Common myeloid progenitor, CD34-positive (primary cell): ENCODE measurements at regions of chr19 and their contacts with region 1.

Region 1: GRCh38 chr19:43425567-43426392 is 11.1 kb downstream of the TEX101 start:
- DNase-seq: peak in 2 of 3 donors; percentile 59 to 61
- H3K4me3 ChIP-seq: no peak overlapping the region
- H3K27ac ChIP-seq: no peak overlapping the region
- H3K4me1 ChIP-seq: peaks cover 0 to 3% (median 1%) of the 10 kb centered on the region in 4 experiments
- H3K27me3 ChIP-seq: no peaks in the 10 kb centered on the region

Region 2: DNA sequence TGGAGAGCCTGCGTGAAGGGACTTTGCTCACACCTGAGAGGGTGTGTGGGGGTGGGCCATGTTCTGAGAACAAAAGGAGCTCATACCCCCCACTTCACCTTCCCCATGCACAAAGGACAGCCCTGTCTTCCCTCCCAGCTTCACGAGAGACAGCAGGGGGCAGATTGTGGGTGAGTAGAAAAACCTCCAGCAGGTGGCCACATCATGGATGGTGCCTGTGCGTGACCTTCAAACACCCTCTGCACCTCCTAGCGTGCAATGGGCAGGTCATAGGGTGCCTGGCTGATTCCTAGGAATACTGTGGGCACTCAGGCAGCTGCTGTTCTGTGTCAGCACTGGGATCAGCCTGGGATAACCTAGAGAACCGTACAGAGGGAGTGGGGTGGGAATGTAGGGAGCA is 120.1 kb before region 1 on chr19:
- CTCF ChIA-PET with region 1: interaction called, 18 read pairs
- POLR2A ChIA-PET with region 1: no interaction called
- DNase-seq: peak; percentile 16 to 47 (median 41)
- H3K4me3 ChIP-seq: no peak overlapping the region
- H3K27ac ChIP-seq: no peak overlapping the region
- H3K4me1 ChIP-seq: peaks cover 0 to 5% (median 2%) of the 10 kb centered on the region in 4 experiments
- H3K27me3 ChIP-seq: peaks cover 0 to 8% (median 0%) of the 10 kb centered on the region in 5 experiments

Region 3: GRCh38 chr19:43474986-43475705 is 49.4 kb after region 1 on chr19:
- CTCF ChIA-PET with region 1: no interaction called
- POLR2A ChIA-PET with region 1: no interaction called
- DNase-seq: peak; percentile 91 to 96 (median 93)
- H3K4me3 ChIP-seq: peak overlapping the region; percentile 37 to 78 (median 61)
- H3K27ac ChIP-seq: peak overlapping the region in 1 of 2 experiments; percentile 70
- H3K4me1 ChIP-seq: peaks cover 0 to 25% (median 21%) of the 10 kb centered on the region in 4 experiments
- H3K27me3 ChIP-seq: no peaks in the 10 kb centered on the region